Heart right ventricle (tissue), 16 donors: ENCODE measurements at regions of chr10 and their contacts with region 1.

Region 1: DNA sequence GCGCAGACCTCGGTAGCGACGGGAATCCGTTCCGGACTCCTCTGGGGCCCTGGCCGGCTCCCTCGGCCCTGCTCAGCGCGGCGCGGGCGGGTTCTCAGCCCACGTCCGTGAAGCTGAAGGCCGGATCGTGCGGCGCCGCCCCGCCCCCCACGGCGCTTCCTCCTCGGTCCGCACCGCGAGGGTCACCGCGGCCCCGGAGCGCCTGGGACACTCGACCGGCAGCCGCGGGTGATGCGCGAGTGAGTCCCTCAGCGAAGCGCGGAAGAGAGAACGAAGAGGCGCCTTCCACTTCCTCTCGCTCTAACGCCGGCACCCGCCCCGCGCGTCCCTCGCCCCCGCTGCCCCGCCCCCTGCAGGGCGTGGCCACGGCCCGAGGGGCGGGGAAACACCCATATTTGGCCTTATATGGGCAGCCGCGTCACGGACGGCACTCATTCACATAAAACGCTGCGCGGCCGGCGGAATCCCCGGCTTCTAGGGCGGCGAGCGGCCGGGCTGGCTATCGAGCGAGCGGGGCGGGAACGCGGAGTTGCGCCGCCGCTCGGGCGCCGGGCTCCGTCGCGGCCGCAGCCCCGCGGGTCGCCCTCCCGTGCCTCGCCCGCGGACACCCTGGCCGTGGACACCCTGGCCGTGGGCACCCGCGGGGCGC is at the start of gene DUSP5:
- DNase-seq: peak; percentile 94 to 95
- ATAC-seq: peak; percentile 76 to 90 (median 87)
- H3K4me3 ChIP-seq: peak within 1 kb of the TSS; percentile 62 to 94 (median 83)
- H3K27ac ChIP-seq: peak within 1 kb of the TSS; percentile 84 to 98 (median 96)
- H3K4me1 ChIP-seq: peaks cover 15 to 66% (median 52%) of the 10 kb centered on the region in 9 donors
- H3K27me3 ChIP-seq: peaks cover 0 to 8% (median 0%) of the 10 kb centered on the region in 7 donors
- CTCF ChIP-seq: peak in 3 of 9 donors; percentile 4 to 11 (median 9)
- total RNA-seq, gene DUSP5: 9.0 to 53.7 (median 22.9) TPM

Region 2: GRCh38 chr10:110311357-110311949 is 186.1 kb before region 1 on chr10:
- intact Hi-C with region 1: loop called in 2 of 10 experiments (anchors 2 to 5 kb)
- DNase-seq: peak; percentile 17 to 55
- ATAC-seq: peak in 7 of 8 donors; percentile 71 to 90 (median 80)
- H3K4me3 ChIP-seq: no peak overlapping the region
- H3K27ac ChIP-seq: peak overlapping the region in 2 of 10 donors; percentile 38 to 41
- H3K4me1 ChIP-seq: peaks cover 0 to 26% (median 1%) of the 10 kb centered on the region in 9 donors
- H3K27me3 ChIP-seq: no peaks in the 10 kb centered on the region
- CTCF ChIP-seq: peak; percentile 50 to 80 (median 66)

Region 3: DNA sequence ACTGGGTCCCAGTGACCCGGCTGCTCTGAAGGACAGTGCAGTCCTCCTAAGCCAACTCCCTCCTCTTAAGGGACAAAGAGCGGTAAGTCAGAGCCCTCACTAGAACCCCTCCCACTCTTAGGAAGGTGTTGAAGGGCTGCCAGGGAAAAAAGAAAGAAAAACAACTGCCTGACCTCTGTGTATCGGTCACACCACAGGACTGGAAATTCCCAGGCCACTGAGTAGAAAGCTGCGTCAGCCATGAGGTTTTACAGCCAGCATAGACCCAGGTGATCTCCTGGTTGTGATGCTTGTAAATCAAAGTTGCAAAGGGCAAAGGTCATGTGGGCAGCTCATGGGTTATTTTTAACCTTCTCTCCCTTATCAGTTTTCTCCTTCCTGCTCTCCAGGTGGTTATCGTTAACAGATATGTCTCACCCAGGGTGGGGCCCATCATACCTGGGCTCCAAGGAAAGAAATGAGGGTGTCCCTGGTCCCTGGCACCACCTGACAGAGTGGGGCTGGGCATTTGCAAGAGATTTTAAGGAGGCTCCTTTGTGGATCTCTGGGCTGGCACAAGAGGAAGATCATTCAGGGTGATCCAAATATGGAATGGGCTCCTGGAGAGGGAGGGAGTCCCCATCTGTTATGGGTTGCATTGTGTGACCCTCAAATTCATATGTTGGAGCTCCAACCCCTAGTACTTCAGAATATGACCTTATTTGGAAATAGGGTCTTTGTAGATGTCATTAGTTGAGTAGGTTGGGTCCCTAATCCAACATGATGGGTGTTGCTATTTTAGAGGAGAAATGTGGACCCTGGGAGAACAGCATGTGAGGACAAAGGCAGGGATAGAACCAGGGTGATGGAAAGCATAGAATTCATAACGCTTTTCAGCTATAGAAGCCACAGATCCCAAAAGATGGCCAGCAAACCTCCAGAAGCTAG is 101.6 kb before region 1 on chr10:
- intact Hi-C with region 1: loop called in 1 of 10 experiments (anchors 10 kb)
- DNase-seq: peak in 1 of 2 donors; percentile 58
- ATAC-seq: peak; percentile 35 to 84 (median 62)
- H3K4me3 ChIP-seq: no peak overlapping the region
- H3K27ac ChIP-seq: peak overlapping the region in 3 of 10 donors; percentile 28 to 64 (median 52)
- H3K4me1 ChIP-seq: peaks cover 0 to 46% (median 21%) of the 10 kb centered on the region in 9 donors
- H3K27me3 ChIP-seq: no peaks in the 10 kb centered on the region
- CTCF ChIP-seq: no peak

Region 4: GRCh38 chr10:110535958-110536891 is 38.7 kb after region 1 on chr10:
- intact Hi-C with region 1: loop called in 1 of 10 experiments (anchors 5 kb)
- DNase-seq: peak in 1 of 2 donors; percentile 43
- ATAC-seq: peak; percentile 54 to 86 (median 69)
- H3K4me3 ChIP-seq: no peak overlapping the region
- H3K27ac ChIP-seq: no peak overlapping the region
- H3K4me1 ChIP-seq: peaks cover 0 to 26% (median 5%) of the 10 kb centered on the region in 9 donors
- H3K27me3 ChIP-seq: no peaks in the 10 kb centered on the region
- CTCF ChIP-seq: peak in 7 of 9 donors; percentile 29 to 69 (median 60)

Region 5: DNA sequence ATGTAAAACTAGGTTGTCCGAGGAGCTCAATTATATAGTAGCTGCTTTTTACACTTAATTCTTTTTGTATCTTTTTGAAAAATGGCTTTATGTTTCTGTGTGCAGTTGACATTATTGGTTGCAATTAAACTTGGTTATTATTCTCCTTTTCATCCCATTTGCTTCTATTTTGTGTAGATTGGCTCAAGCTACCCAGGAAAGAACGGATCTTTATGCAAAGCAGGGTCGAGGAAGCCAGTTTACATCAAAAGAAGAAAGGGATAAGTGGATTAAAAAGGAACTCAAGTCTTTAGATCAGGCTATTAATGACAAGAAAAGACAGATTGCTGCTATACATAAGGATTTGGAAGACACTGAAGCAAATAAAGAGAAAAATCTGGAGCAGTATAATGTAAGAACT is 86.4 kb after region 1 on chr10:
- intact Hi-C with region 1: no loop called
- DNase-seq: no peak
- ATAC-seq: no peak
- H3K4me3 ChIP-seq: no peak overlapping the region
- H3K27ac ChIP-seq: no peak overlapping the region
- H3K4me1 ChIP-seq: no peaks in the 10 kb centered on the region
- H3K27me3 ChIP-seq: no peaks in the 10 kb centered on the region
- CTCF ChIP-seq: no peak

Region 6: DNA sequence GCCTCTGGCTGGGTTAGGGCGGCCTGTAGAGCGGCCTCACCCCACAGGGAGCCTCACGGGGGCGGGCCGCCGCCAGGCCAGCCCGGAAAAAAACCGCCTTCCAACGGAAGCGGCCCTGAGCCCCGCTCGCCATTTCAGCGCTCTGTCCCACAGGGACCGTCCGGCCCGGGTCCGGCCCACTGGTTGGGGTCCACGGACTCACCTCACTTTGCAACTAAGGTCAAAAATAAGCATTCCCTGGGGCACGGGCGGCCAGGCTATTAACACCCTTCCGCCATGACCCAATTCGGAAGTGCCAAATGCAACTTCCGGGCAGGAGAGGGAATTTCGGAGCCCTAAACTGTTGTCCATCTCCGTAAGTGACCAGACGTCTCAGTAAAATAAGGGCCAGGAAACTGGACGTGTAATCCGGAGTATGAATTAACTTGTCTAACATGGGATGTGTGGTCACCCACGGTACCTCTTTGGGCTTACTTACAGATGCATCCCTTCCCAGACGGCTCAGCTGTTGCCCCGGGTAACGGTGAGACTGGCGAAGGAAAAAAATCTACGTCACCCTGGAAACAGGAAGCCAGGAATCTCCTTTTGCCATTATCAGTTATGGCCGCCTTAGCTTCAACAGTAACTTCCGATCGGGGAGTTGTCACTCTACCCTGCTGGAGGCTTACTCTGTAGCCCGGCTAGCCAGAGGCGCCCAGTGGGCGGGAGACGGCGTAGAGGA is 421.2 kb after region 1 on chr10 and contains the start of gene BBIP1:
- intact Hi-C with region 1: loop called in 1 of 10 experiments (anchors 10 kb)
- DNase-seq: no peak
- ATAC-seq: peak; percentile 95 to 98 (median 96)
- H3K4me3 ChIP-seq: peak within 1 kb of the TSS; percentile 59 to 79 (median 70)
- H3K27ac ChIP-seq: peak within 1 kb of the TSS; percentile 93 to 99 (median 97)
- H3K4me1 ChIP-seq: peaks cover 7 to 54% (median 40%) of the 10 kb centered on the region in 9 donors
- H3K27me3 ChIP-seq: no peaks in the 10 kb centered on the region
- CTCF ChIP-seq: peak in 2 of 9 donors; percentile 1 to 27
- total RNA-seq, gene BBIP1: 16.6 to 30.7 (median 23.8) TPM